Posterior vena cava (tissue), 2 donors: ENCODE measurements at regions of chr1 and their contacts with region 1.

Region 1: DNA sequence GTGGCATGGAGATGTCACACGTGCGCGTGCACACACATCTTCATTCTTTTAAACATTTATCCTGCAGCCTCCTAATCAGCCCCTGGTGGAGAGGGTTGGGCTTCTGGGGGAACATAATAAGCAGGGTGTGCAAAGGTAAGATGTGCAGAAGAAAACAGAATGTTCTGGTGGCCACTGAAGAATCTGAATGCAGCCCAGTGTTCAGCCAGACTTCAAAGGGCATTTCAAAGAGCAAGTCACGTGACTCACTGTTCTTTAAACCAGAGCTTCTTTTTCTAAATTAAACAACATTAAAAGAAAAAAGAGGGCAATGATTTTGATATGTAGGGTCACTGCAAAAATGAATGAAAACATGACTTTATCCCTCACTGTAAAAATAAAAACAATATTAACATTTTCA is 89.8 kb downstream of the ABCA4 start:
- DNase-seq: no peak

Region 2: GRCh38 chr1:94081566-94082344 is 50.6 kb after region 1 on chr1:
- intact Hi-C with region 1: no loop called
- DNase-seq: no peak

Region 3: GRCh38 chr1:94341961-94342360 is 310.8 kb after region 1 on chr1:
- intact Hi-C with region 1: loop called in 1 of 2 experiments (anchors 2 kb)
- DNase-seq: no peak